HepG2 (cell line): ENCODE measurements at regions of chr10 and their contacts with region 1.

Region 1: GRCh38 chr10:99395750-99396445 is 34.5 kb downstream of the GOT1 start:
- DNase-seq: peak; percentile 89
- ATAC-seq: peak; percentile 80
- H3K4me3 ChIP-seq: no peak overlapping the region
- H3K27ac ChIP-seq: peak overlapping the region; percentile 76
- H3K4me1 ChIP-seq: peaks cover 58% of the 10 kb centered on the region
- H3K27me3 ChIP-seq: no peaks in the 10 kb centered on the region
- CTCF ChIP-seq: 0 out of 2 replicates have a peak, but pooled peaks have one; percentile 9
- EP300 ChIP-seq: peak; percentile 52 to 92; a peak in 3 of 4 replicates
- POLR2A ChIP-seq: no peak
- RAD21 ChIP-seq: no peak

Region 2: DNA sequence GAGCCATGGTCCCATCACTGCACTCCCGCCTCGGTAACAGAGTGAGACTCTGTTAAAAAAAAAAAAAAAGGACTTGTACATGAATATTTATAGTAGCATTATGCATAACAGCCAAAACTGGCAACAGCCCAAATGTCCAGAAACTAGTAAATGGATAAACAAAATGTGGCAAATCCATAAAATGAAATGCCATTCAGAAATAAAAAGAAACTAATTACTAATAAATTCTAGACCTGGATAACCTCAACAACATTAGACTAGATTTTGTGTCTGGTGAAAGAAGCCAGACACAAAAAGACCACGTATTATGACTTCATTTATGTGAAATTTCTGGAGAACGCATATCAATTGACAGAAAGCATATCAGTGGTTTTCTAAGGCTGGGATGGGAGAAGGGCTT is 234.7 kb before region 1 on chr10:
- CTCF ChIA-PET with region 1: no interaction called
- POLR2A ChIA-PET with region 1: no interaction called
- in situ Hi-C with region 1: no loop called
- intact Hi-C with region 1: no loop called
- DNase-seq: no peak
- ATAC-seq: no peak
- H3K4me3 ChIP-seq: no peak overlapping the region
- H3K27ac ChIP-seq: no peak overlapping the region
- H3K4me1 ChIP-seq: no peaks in the 10 kb centered on the region
- H3K27me3 ChIP-seq: no peaks in the 10 kb centered on the region
- CTCF ChIP-seq: no peak
- EP300 ChIP-seq: no peak
- POLR2A ChIP-seq: no peak
- RAD21 ChIP-seq: no peak

Region 3: GRCh38 chr10:99412099-99412498 is 16.2 kb after region 1 on chr10:
- CTCF ChIA-PET with region 1: no interaction called
- POLR2A ChIA-PET with region 1: no interaction called
- in situ Hi-C with region 1: no loop called
- intact Hi-C with region 1: loop called (anchors 2 kb)
- DNase-seq: peak; percentile 75
- ATAC-seq: peak; percentile 98
- H3K4me3 ChIP-seq: no peak overlapping the region
- H3K27ac ChIP-seq: peak overlapping the region; percentile 49
- H3K4me1 ChIP-seq: peaks cover 20% of the 10 kb centered on the region
- H3K27me3 ChIP-seq: no peaks in the 10 kb centered on the region
- CTCF ChIP-seq: peak; percentile 64
- EP300 ChIP-seq: peak in 1 of 2 experiments; percentile 53; a peak in 2 of 4 replicates
- POLR2A ChIP-seq: no peak
- RAD21 ChIP-seq: peak; percentile 28; the same call in 1 of the 2 replicates

Region 4: GRCh38 chr10:99430451-99431189 is 34.7 kb after region 1 on chr10 and contains the start of gene GOT1:
- CTCF ChIA-PET with region 1: interaction called, 19 read pairs
- POLR2A ChIA-PET with region 1: interaction called, 16 read pairs
- in situ Hi-C with region 1: loop called (anchors 5 kb)
- intact Hi-C with region 1: loop called (anchors 1 kb)
- DNase-seq: peak; percentile 99
- ATAC-seq: peak; percentile 97
- H3K4me3 ChIP-seq: peak within 1 kb of the TSS; percentile 87 to 99 (median 93)
- H3K27ac ChIP-seq: peak within 1 kb of the TSS; percentile 75
- H3K4me1 ChIP-seq: peaks cover 55% of the 10 kb centered on the region
- H3K27me3 ChIP-seq: no peaks in the 10 kb centered on the region; a peak in 1 of 5 replicates
- CTCF ChIP-seq: no peak
- EP300 ChIP-seq: peak in 1 of 2 experiments; percentile 69; a peak in 1 of 4 replicates
- POLR2A ChIP-seq: peak; percentile 80 to 92
- RAD21 ChIP-seq: peak; percentile 55
- total RNA-seq, gene GOT1: 102 and 138 TPM in 2 replicates

Region 5: GRCh38 chr10:99435986-99436638 is 40.2 kb after region 1 on chr10:
- CTCF ChIA-PET with region 1: interaction called, 19 read pairs
- POLR2A ChIA-PET with region 1: interaction called, 16 read pairs
- in situ Hi-C with region 1: loop called (anchors 5 kb)
- intact Hi-C with region 1: loop called (anchors 1 kb)
- DNase-seq: peak; percentile 48
- ATAC-seq: peak; percentile 73
- H3K4me3 ChIP-seq: no peak overlapping the region
- H3K27ac ChIP-seq: no peak overlapping the region
- H3K4me1 ChIP-seq: peaks cover 30% of the 10 kb centered on the region
- H3K27me3 ChIP-seq: no peaks in the 10 kb centered on the region; a peak in 1 of 5 replicates
- CTCF ChIP-seq: peak; percentile 69
- EP300 ChIP-seq: no peak
- POLR2A ChIP-seq: no peak
- RAD21 ChIP-seq: 0 out of 2 replicates have a peak, but pooled peaks have one; percentile 40

Region 6: GRCh38 chr10:99548041-99548530 is 152.2 kb after region 1 on chr10:
- CTCF ChIA-PET with region 1: interaction called, 10 read pairs
- POLR2A ChIA-PET with region 1: no interaction called
- in situ Hi-C with region 1: loop called (anchors 5 kb)
- intact Hi-C with region 1: loop called (anchors 2 kb)
- DNase-seq: peak; percentile 32
- ATAC-seq: peak; percentile 96
- H3K4me3 ChIP-seq: no peak overlapping the region
- H3K27ac ChIP-seq: no peak overlapping the region
- H3K4me1 ChIP-seq: no peaks in the 10 kb centered on the region
- H3K27me3 ChIP-seq: peaks cover 2 to 6% of the 10 kb centered on the region in 2 experiments; a peak in 3 of 5 replicates
- CTCF ChIP-seq: peak; percentile 69
- EP300 ChIP-seq: no peak
- POLR2A ChIP-seq: no peak
- RAD21 ChIP-seq: no peak

Region 7: GRCh38 chr10:99612167-99612831 is 216.4 kb after region 1 on chr10:
- CTCF ChIA-PET with region 1: interaction called, 10 read pairs
- POLR2A ChIA-PET with region 1: no interaction called
- in situ Hi-C with region 1: loop called (anchors 5 kb)
- intact Hi-C with region 1: loop called (anchors 1 kb)
- DNase-seq: peak; percentile 63
- ATAC-seq: peak; percentile 70
- H3K4me3 ChIP-seq: no peak overlapping the region
- H3K27ac ChIP-seq: no peak overlapping the region
- H3K4me1 ChIP-seq: peaks cover 8% of the 10 kb centered on the region
- H3K27me3 ChIP-seq: no peaks in the 10 kb centered on the region
- CTCF ChIP-seq: peak; percentile 84
- EP300 ChIP-seq: no peak
- POLR2A ChIP-seq: no peak
- RAD21 ChIP-seq: peak; percentile 82